Heart left ventricle (tissue), 16 donors: ENCODE measurements at regions of chr18 and their contacts with region 1.

Region 1: DNA sequence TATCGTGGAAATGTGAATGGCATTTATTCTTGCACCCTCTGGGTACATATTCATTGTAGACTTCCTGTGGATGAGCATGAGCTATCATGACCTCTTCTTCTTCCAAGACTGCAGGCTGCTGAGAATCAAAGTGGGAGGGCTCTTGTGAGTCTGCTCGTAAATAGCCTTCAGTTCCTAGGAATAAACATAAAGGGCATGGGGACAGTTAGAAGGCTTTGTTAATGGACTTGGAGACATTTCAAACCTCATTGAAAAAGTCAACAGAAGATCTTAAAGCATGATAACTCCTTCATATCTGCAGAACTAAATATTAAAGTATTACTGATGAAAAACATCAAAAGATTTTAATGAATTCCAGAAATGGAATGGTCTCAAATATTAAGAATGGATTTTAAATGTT is 14.8 kb downstream of the SLC39A6 start:
- DNase-seq: no peak
- ATAC-seq: no peak
- H3K4me3 ChIP-seq: no peak overlapping the region
- H3K27ac ChIP-seq: no peak overlapping the region
- H3K4me1 ChIP-seq: no peaks in the 10 kb centered on the region
- H3K27me3 ChIP-seq: no peaks in the 10 kb centered on the region
- CTCF ChIP-seq: no peak
- POLR2A ChIP-seq: no peak

Region 2: DNA sequence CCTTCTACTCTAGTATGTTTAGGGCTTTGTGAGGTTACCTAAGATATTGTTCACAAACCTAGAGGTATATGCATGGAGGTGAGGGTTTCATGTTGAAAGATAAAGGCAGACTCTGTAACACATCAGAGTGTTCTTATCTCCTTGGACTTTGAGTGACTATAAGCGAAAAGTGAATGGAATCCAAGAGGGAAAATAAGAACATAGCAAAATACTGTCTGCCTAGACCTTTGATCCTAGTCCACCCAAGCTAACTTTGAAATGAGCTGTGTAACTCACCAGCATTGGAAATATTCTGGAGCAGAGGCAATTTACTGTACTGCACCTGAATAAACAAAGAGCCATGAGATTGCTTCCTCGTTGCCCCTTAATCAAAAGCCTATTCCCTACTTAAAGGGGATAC is 561.0 kb before region 1 on chr18:
- intact Hi-C with region 1: no loop called
- DNase-seq: no peak
- ATAC-seq: no peak
- H3K4me3 ChIP-seq: no peak overlapping the region
- H3K27ac ChIP-seq: no peak overlapping the region
- H3K4me1 ChIP-seq: no peaks in the 10 kb centered on the region
- H3K27me3 ChIP-seq: no peaks in the 10 kb centered on the region
- CTCF ChIP-seq: no peak
- POLR2A ChIP-seq: no peak

Region 3: DNA sequence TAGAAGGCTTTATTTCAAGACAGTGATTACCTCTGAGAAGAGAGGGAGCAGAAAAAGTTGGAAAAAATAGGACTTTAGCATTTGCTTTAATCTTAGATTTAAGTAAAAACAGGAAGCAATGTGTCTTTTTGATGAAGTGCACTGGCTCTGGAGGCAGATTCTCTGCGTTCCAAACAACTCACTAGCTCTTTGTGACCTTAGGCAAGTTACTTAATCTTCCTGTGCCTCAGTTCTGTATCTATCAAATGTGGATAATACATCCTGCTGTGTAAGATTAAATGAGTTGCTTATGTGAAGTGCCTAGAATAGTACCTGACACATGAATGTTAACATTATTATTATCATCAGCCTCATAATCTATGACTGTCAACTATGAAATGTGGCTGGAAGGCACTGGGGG is 89.3 kb before region 1 on chr18:
- intact Hi-C with region 1: loop called in 1 of 10 experiments (anchors 10 kb)
- DNase-seq: no peak
- ATAC-seq: no peak
- H3K4me3 ChIP-seq: no peak overlapping the region
- H3K27ac ChIP-seq: no peak overlapping the region
- H3K4me1 ChIP-seq: peaks cover 0 to 8% (median 0%) of the 10 kb centered on the region in 12 donors
- H3K27me3 ChIP-seq: no peaks in the 10 kb centered on the region
- CTCF ChIP-seq: no peak
- POLR2A ChIP-seq: no peak